Panc1 (cell line): ENCODE measurements at regions of chr17 and their contacts with region 1.

Region 1: DNA sequence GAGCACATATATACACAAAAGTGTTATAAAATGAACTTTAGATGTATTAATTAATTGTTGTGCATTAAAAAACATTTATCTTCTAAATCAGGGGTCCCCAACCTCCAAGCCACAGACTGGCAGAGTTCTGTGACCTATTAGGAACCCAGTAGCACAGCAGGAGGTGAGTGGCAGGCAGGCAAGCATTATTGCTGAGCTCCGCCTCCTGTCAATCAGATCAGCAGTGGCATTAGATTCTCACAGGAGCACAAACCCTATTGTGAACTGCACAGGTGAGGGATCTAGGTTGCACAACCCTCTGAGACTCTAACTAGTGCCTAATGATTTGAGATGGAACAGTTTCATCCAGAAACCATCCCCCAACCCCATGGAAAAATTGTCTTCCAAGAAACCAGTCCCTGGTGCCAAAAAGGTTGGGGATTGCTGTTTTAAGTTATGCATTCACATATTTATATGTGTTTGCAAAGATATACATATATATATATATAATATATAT is 583.7 kb downstream of the KCNJ2 start:
- DNase-seq: no peak
- ATAC-seq: no peak
- H3K4me3 ChIP-seq: no peak overlapping the region
- H3K27ac ChIP-seq: no peak overlapping the region
- H3K4me1 ChIP-seq: no peaks in the 10 kb centered on the region
- H3K27me3 ChIP-seq: 0 out of 2 replicates have a peak, but pooled peaks cover 3% of the 10 kb centered on the region
- CTCF ChIP-seq: no peak

Region 2: DNA sequence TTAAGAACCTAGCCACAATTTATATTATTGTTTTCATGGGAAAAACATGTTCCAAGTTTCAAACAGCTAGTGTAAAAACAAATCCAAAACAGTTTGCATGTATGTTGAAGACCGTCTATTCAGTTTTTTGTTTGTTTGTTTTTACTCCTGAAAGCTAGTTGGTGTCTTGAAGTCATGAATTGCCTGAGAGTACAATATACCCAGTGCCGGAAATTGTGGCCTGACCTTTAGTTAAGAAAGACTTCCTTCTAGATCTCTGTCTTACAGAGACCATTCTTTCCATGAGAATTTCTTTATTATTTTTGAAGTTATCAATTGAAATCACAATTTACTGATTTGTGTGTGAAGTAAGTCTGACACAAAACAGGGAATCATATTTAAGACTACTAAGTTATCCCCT is 108.9 kb before region 1 on chr17:
- CTCF ChIA-PET with region 1: no interaction called
- POLR2A ChIA-PET with region 1: no interaction called
- in situ Hi-C with region 1: no loop called
- intact Hi-C with region 1: loop called (anchors 10 kb)
- DNase-seq: no peak
- ATAC-seq: no peak
- H3K4me3 ChIP-seq: no peak overlapping the region
- H3K27ac ChIP-seq: no peak overlapping the region
- H3K4me1 ChIP-seq: no peaks in the 10 kb centered on the region
- H3K27me3 ChIP-seq: no peaks in the 10 kb centered on the region
- CTCF ChIP-seq: no peak